ENCODE measurements at regions of chr6 and their contacts with region 1.

Region 1: DNA sequence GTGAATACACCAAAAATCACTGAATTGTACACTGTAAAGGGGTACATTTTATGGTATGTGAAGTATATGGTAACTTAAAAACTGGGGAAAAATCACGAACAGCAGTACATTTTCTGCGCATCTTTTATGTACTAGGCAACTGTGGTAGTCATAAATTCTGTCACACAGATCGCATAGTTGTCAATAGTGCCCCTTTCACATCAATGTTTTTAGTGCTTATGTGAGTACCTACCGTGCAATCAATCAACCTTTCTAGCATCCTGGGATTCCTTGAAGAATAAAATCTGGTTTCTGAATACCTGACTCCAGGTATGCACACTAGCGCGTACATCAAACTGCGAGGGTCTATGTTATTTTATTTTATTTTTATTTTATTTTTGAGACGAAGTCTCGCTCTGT is 637 bp upstream of the RPF2 start:
- DNase-seq: no peak
- H3K4me3 Mint-ChIP-seq: peak overlapping the region; percentile 98
- H3K27ac Mint-ChIP-seq: peak overlapping the region; percentile 99
- H3K4me1 Mint-ChIP-seq: peaks cover 29% of the 10 kb centered on the region
- H3K27me3 Mint-ChIP-seq: no peaks in the 10 kb centered on the region

Region 2: DNA sequence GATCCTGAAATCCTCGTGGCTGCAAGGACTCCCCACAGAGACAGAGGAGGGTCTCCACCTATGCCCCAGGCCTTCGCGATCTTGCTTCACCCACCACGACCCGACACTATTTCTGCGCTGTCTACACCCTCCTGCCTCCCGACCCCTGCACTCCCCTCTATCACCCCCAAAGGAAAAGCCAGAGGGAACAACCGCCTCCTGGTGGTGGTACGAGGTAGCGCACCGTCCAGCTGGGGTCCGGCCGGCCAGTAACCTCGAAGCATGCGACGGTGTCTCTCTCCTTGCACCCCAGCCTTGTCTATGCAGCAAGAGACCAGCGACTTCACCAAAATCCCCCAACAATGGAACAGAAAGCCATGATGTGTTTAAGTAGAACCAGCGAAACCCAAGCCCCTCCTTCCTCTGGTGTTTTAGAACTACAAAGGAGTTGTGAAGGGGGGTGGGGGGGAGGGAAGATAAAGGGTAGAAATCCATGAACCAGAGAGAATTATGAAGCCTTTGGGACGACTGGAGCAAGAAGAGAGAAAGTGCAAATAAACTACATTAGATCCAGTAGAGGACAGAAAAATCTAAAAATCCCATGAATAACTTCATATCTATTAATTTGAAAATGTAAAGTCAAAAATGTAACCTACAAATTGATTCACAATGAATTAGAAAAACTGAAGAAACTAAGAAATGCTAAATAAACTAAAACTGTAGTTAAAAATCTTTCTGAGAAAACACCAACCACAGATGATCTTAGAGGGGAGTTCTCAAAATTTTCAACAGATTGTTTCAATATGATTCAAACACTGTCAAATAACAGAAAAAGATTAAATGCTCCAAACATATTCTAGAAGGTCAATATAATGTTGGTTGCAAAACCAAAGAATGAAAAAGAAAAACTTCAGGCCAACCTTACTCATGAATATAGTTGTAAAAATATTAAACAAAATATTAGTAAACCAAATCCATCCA is 334.0 kb before region 1 on chr6:
- intact Hi-C with region 1: no loop called
- DNase-seq: no peak
- H3K4me3 Mint-ChIP-seq: no peak overlapping the region
- H3K27ac Mint-ChIP-seq: peak overlapping the region; percentile 65
- H3K4me1 Mint-ChIP-seq: peaks cover 5% of the 10 kb centered on the region
- H3K27me3 Mint-ChIP-seq: no peaks in the 10 kb centered on the region

Region 3: GRCh38 chr6:110873981-110874879 is 107.0 kb before region 1 on chr6 and contains the start of gene AMD1:
- intact Hi-C with region 1: loop called (anchors 2 kb)
- DNase-seq: peak; percentile 98
- H3K4me3 Mint-ChIP-seq: peak within 1 kb of the TSS; percentile 98
- H3K27ac Mint-ChIP-seq: peak within 1 kb of the TSS; percentile 99
- H3K4me1 Mint-ChIP-seq: peaks cover 27% of the 10 kb centered on the region
- H3K27me3 Mint-ChIP-seq: no peaks in the 10 kb centered on the region
- total RNA-seq, gene AMD1: 108 and 113 TPM in 2 replicates

Region 4: DNA sequence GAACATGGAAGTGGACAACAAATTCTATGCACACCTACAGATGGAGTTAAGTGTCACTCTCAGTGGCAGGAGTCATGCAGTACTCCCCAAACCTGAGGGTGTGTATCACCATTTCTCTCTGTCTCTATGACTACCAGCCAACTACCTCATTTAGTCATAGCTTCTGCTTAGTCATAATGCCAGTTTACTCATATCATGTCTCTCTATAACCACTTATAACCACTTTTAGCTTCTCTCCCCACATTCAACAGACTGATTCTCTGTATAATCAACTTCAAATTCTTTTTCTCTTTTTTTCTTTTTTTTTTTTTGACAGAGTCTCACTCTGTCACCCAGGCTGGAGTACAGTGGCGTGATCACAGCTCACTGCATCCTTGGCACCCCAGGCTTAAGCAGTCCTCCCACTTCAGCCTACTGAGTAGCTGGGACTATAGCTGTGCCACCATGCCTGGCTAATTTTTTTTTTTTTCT is 36.5 kb before region 1 on chr6:
- intact Hi-C with region 1: loop called (anchors 5 kb)
- DNase-seq: peak; percentile 80
- H3K4me3 Mint-ChIP-seq: peak overlapping the region; percentile 32
- H3K27ac Mint-ChIP-seq: peak overlapping the region; percentile 86
- H3K4me1 Mint-ChIP-seq: peaks cover 7% of the 10 kb centered on the region
- H3K27me3 Mint-ChIP-seq: no peaks in the 10 kb centered on the region

Region 5: DNA sequence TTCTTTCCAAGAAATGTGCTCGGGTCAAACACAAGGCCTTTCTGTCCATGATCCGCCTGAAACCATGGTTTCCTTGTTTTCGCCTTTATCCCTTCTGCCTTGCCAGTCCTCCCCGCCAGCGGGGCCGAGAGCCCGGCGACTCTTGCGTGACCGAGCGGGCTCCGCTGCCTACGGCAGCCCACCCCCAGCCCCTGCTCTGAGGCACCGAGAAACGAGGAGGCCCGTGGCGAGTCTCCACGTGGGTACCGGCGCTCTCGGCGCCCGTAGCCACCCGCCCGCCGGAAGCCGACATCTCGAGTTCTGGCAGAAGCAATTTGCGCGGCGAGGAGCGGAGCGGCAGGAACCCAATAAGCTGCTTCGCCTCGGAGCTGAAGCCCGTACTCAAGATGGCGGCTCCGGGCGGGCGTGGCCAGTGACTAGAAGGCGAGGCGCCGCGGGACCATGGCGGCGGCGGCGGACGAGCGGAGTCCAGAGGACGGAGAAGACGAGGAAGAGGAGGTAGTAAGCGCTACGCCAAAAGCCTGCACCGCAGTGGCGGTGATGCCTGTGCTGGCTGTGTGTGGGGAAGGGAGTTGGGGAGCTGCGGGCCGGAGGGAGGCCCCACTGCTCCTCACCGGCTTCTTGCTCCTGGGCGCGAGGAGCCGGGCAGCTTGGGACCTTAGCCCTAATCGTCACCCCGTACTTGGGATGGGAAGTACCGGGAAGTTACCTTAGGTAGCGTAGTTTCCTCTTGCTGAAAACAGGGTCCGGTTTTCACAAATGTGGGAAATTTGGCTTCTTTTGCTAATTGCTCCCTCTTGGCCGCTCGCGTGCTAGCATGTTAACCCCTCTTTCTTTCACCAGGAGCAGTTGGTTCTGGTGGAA is 22.6 kb before region 1 on chr6 and contains the start of gene GTF3C6:
- intact Hi-C with region 1: loop called (anchors 1 kb)
- DNase-seq: peak; percentile 98
- H3K4me3 Mint-ChIP-seq: peak within 1 kb of the TSS; percentile 93
- H3K27ac Mint-ChIP-seq: peak within 1 kb of the TSS; percentile 97
- H3K4me1 Mint-ChIP-seq: peaks cover 12% of the 10 kb centered on the region
- H3K27me3 Mint-ChIP-seq: no peaks in the 10 kb centered on the region
- total RNA-seq, gene GTF3C6: 145 and 146 TPM in 2 replicates

Region 6: DNA sequence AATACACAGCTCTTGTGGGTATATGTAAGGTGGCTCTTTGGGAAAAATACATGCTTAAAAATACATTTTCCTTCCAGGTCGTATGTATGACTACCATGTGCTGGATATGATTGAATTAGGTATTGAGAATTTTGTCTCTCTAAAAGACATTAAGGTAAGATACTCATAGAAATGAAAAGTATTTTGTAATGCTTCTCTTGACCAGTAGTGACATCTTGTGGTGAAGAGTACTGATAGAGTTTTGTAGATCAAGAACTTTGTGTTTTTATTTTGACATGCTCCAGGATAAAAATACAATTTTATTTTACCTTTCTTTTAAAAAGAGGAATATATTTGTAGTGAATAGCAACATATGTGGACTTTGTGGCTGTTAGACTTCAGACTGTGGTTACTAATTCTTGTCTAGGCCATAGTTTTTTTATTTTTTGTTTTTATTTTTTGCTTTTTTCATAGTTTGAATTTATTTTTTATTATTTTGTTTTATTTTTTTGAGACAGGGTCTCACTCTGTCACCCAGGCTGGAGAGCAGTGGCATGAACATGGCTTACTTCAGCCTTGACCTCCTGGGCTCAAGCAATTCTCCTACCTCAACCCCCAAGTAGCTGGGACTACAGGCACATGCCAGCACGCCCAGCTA is 18.6 kb after region 1 on chr6:
- intact Hi-C with region 1: loop called (anchors 2 kb)
- DNase-seq: no peak
- H3K4me3 Mint-ChIP-seq: no peak overlapping the region
- H3K27ac Mint-ChIP-seq: peak overlapping the region; percentile 40
- H3K4me1 Mint-ChIP-seq: peaks cover 7% of the 10 kb centered on the region
- H3K27me3 Mint-ChIP-seq: no peaks in the 10 kb centered on the region